MCF 10A (cell line): ENCODE measurements at regions of chr4 and their contacts with region 1.

Region 1: GRCh38 chr4:102263011-102263787 is 82.1 kb downstream of the SLC39A8 start:
- DNase-seq: peak; percentile 58
- H3K4me3 Mint-ChIP-seq: no peak overlapping the region
- H3K27ac Mint-ChIP-seq: no peak overlapping the region
- H3K4me1 Mint-ChIP-seq: peaks cover 7% of the 10 kb centered on the region
- H3K27me3 Mint-ChIP-seq: no peaks in the 10 kb centered on the region
- CTCF ChIP-seq: peak; percentile 67

Region 2: GRCh38 chr4:100742045-100742444 is 1521.2 kb before region 1 on chr4:
- CTCF ChIA-PET with region 1: no interaction called
- POLR2A ChIA-PET with region 1: no interaction called
- intact Hi-C with region 1: loop called (anchors 2 kb)
- DNase-seq: peak; percentile 77
- H3K4me3 Mint-ChIP-seq: no peak overlapping the region
- H3K27ac Mint-ChIP-seq: no peak overlapping the region
- H3K4me1 Mint-ChIP-seq: peaks cover 22% of the 10 kb centered on the region
- H3K27me3 Mint-ChIP-seq: no peaks in the 10 kb centered on the region
- CTCF ChIP-seq: peak; percentile 53

Region 3: GRCh38 chr4:100907465-100908454 is 1355.4 kb before region 1 on chr4:
- CTCF ChIA-PET with region 1: no interaction called
- POLR2A ChIA-PET with region 1: no interaction called
- intact Hi-C with region 1: loop called (anchors 2 kb)
- DNase-seq: peak; percentile 31
- H3K4me3 Mint-ChIP-seq: no peak overlapping the region
- H3K27ac Mint-ChIP-seq: no peak overlapping the region
- H3K4me1 Mint-ChIP-seq: peaks cover 4% of the 10 kb centered on the region
- H3K27me3 Mint-ChIP-seq: no peaks in the 10 kb centered on the region
- CTCF ChIP-seq: peak; percentile 39

Region 4: DNA sequence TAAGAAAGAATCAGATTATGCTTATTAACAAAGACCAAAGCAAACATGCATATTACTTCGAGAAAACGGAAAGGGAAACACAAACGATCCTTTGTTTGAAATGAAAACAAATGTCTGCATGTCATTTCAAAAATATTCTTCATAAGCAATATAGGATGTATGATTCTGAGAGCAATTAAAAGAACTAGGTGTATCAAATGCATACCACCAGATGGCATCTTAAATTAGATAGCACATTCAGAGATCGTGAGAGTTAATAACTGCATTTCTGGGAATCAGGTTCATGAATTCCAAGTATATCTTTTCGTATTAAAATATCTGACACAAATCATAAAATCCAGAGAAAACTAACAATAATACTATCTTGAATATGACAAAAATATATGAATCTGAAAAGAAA is 1075.4 kb before region 1 on chr4:
- CTCF ChIA-PET with region 1: no interaction called
- POLR2A ChIA-PET with region 1: no interaction called
- intact Hi-C with region 1: loop called (anchors 5 kb)
- DNase-seq: peak; percentile 43
- H3K4me3 Mint-ChIP-seq: no peak overlapping the region
- H3K27ac Mint-ChIP-seq: no peak overlapping the region
- H3K4me1 Mint-ChIP-seq: peaks cover 26% of the 10 kb centered on the region
- H3K27me3 Mint-ChIP-seq: no peaks in the 10 kb centered on the region
- CTCF ChIP-seq: peak; percentile 30

Region 5: GRCh38 chr4:102449751-102450352 is 186.7 kb after region 1 on chr4:
- CTCF ChIA-PET with region 1: no interaction called
- POLR2A ChIA-PET with region 1: no interaction called
- intact Hi-C with region 1: no loop called
- DNase-seq: peak; percentile 72
- H3K4me3 Mint-ChIP-seq: no peak overlapping the region
- H3K27ac Mint-ChIP-seq: no peak overlapping the region
- H3K4me1 Mint-ChIP-seq: no peaks in the 10 kb centered on the region
- H3K27me3 Mint-ChIP-seq: no peaks in the 10 kb centered on the region
- CTCF ChIP-seq: peak; percentile 63